WTC11 (cell line): ENCODE measurements at regions of chr16 and their contacts with region 1.

Region 1: DNA sequence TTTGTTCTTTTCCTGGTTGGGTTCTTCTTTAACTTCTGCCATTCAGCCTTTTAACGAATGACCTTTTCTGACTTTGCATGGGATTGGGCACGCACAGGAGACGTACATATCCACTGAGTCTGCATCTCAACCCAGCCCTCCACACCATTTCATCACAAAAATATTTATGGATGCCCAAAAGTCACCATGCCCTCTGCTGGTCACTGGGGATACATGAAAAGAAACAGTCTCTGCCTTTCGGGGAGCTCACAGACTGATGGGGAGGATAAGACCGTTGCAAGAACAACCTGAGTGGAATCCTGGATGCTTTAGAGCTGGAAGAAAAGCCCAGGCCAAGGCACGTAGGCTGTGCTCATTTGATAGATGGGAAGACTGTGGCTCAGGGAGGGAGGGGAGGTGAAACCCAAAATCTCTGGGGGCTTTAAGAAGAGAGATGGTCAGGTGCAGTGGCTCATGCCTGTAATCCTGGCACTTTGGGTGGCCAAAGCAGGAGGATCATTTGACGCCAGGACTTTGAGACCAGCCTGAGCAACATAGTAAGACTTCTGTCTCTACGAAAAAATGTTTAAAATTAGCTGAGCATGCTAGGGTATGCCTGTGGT is 7.9 kb upstream of the MT2A start:
- DNase-seq: peak; percentile 31
- ATAC-seq: peak; percentile 73
- H3K4me3 Mint-ChIP-seq: no peak overlapping the region
- H3K27ac Mint-ChIP-seq: no peak overlapping the region
- H3K4me1 Mint-ChIP-seq: no peaks in the 10 kb centered on the region; the same call in 1 of the 2 replicates
- H3K27me3 Mint-ChIP-seq: peaks cover 22% of the 10 kb centered on the region
- CTCF ChIP-seq: 0 out of 2 replicates have a peak, but pooled peaks have one; percentile 24

Region 2: DNA sequence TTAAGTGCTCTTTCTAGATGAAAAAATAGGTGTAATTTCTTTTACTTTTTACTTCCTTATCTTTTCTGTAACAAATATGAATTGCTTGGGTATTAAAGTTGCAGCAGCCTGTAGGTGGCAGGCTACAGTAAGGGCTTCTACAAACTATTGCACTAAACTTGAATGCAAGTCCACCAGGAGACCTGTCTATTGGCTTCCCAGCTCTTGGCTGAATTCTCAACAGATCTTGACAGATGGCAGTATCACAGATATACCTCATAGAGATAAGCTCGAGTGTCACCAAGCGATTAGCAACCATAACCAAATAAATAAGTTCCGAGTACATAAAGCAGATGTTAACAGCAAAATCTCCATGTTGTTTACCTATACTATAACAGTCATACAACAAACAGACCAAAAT is 86.5 kb before region 1 on chr16:
- CTCF ChIA-PET with region 1: interaction called, 18 read pairs
- POLR2A ChIA-PET with region 1: no interaction called
- DNase-seq: no peak
- ATAC-seq: peak; percentile 86
- H3K4me3 Mint-ChIP-seq: no peak overlapping the region
- H3K27ac Mint-ChIP-seq: no peak overlapping the region
- H3K4me1 Mint-ChIP-seq: peaks cover 14% of the 10 kb centered on the region
- H3K27me3 Mint-ChIP-seq: no peaks in the 10 kb centered on the region
- CTCF ChIP-seq: no peak

Region 3: GRCh38 chr16:56547120-56547948 is 53.2 kb before region 1 on chr16:
- CTCF ChIA-PET with region 1: interaction called, 15 read pairs
- POLR2A ChIA-PET with region 1: no interaction called
- DNase-seq: peak; percentile 32
- ATAC-seq: peak; percentile 90
- H3K4me3 Mint-ChIP-seq: peak overlapping the region; percentile 58
- H3K27ac Mint-ChIP-seq: peak overlapping the region; percentile 98
- H3K4me1 Mint-ChIP-seq: peaks cover 34% of the 10 kb centered on the region
- H3K27me3 Mint-ChIP-seq: no peaks in the 10 kb centered on the region; the same call in 1 of the 2 replicates
- CTCF ChIP-seq: no peak

Region 4: GRCh38 chr16:56576585-56577293 is 23.8 kb before region 1 on chr16:
- CTCF ChIA-PET with region 1: interaction called, 13 read pairs
- POLR2A ChIA-PET with region 1: interaction called, 3 read pairs
- DNase-seq: peak; percentile 90
- ATAC-seq: peak; percentile 100
- H3K4me3 Mint-ChIP-seq: no peak overlapping the region
- H3K27ac Mint-ChIP-seq: no peak overlapping the region
- H3K4me1 Mint-ChIP-seq: no peaks in the 10 kb centered on the region
- H3K27me3 Mint-ChIP-seq: peaks cover 4% of the 10 kb centered on the region
- CTCF ChIP-seq: peak; percentile 84

Region 5: DNA sequence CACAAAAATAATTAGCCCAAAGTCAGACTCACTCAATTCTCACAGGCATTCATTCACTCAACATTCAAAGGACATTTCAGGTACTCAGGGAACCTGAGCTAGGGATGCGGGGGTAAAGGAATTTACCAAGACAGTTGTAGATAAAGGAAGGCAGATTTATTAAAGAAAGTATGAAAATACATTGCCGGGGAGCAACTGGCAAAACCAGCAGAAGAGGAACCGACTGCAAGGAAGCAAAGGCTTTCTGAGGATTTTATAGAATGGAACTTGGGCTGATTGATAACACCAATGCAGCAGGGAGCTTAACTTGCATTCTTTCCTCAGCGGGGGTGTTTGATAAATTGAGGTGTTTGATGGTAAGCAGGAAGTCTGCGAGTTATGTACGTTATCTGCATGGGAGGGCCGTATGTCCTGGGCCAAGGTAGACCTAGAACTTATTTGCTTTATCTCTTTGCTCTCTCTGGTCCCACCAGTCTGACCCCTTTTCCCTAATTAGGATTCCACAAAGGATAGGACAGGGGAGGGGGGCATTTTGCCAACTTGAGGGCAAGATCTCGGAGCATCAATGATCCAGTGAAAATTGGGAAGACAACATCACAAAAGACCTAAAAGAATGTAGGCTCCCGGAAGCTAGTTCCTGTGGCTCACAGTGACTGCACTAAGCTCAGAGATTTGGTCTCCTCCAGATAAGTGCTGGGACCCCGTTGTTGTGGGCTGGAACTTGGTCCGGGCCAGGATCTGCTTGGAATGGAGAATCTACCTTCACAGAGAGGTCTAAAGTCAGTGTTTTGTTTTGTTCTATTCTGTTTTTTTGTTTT is 16.9 kb before region 1 on chr16:
- CTCF ChIA-PET with region 1: interaction called, 11 read pairs
- POLR2A ChIA-PET with region 1: interaction called, 3 read pairs
- DNase-seq: no peak
- ATAC-seq: no peak
- H3K4me3 Mint-ChIP-seq: no peak overlapping the region
- H3K27ac Mint-ChIP-seq: no peak overlapping the region
- H3K4me1 Mint-ChIP-seq: peaks cover 7% of the 10 kb centered on the region; the same call in 1 of the 2 replicates
- H3K27me3 Mint-ChIP-seq: peaks cover 31% of the 10 kb centered on the region
- CTCF ChIP-seq: no peak